GM10248 (cell line): ENCODE measurements at regions of chr1 and their contacts with region 1.

Region 1: GRCh38 chr1:70387507-70387906 is 23.6 kb upstream of the CTH start:
- DNase-seq: no peak
- CTCF ChIP-seq: no peak

Region 2: DNA sequence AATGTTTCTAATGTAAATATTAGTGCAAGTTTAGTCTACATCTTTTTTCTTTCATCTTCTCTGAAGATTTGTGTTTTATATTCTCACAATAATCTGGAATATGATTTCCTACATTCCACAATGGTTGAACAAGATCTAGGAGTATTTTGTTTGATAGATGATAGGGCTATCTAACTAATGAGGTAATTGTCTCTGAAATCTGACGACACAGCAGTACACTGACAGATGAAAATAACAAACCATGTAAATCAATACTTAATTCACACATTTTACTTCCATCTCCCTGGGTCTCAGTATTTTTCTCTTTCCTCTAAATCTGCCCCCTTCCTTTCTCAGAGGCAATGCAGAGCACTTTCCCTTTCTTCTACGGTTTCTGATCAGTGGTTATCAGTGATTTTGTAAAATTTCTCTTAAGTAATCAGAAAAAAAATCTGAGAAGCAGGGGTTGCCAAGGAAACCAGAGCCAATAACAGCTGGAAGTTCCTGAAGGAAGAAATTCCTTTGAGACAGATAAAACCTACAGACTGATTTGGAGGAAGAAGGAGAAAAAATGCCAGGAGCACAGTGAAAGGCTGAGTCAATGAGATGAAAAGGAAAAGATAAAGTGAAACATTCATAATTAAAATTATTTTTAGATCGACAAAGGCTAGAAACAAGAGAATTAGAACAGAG is 25.6 kb before region 1 on chr1:
- CTCF ChIA-PET with region 1: no interaction called
- POLR2A ChIA-PET with region 1: no interaction called
- DNase-seq: no peak
- CTCF ChIP-seq: no peak

Region 3: DNA sequence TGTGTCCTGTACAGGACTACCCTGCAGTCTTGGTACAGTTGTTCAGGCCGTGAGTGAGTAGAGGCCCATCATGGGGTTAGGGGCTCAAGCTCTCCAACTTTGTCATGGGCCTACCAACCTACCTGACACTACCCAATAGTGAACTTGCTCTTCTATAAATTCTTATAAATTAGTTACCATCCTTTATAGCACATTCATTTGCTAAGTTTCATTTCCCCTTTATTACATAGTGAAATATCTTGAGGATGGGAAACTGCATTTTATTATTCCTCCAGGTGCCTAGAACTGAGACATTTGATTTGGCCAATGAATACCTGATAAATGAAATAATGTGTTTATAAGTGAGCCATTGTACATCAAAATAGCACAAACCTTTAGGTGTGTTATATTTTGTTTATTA is 14.5 kb after region 1 on chr1:
- CTCF ChIA-PET with region 1: interaction called, 15 read pairs
- POLR2A ChIA-PET with region 1: no interaction called
- DNase-seq: no peak
- CTCF ChIP-seq: no peak